Right ventricle myocardium inferior (tissue), 1 donor: ENCODE measurements at regions of chr17 and their contacts with region 1.

Region 1: GRCh38 chr17:82648166-82648668 is at the start of gene WDR45B:
- DNase-seq: peak; percentile 98
- ATAC-seq: peak; percentile 98
- total RNA-seq, gene WDR45B: 38.0 TPM

Region 2: GRCh38 chr17:82698065-82698973 is 50.1 kb after region 1 on chr17 and contains the start of gene RAB40B:
- intact Hi-C with region 1: loop called (anchors 5 kb)
- DNase-seq: peak; percentile 99
- ATAC-seq: peak; percentile 99
- total RNA-seq, gene RAB40B: 19.9 TPM

Region 3: DNA sequence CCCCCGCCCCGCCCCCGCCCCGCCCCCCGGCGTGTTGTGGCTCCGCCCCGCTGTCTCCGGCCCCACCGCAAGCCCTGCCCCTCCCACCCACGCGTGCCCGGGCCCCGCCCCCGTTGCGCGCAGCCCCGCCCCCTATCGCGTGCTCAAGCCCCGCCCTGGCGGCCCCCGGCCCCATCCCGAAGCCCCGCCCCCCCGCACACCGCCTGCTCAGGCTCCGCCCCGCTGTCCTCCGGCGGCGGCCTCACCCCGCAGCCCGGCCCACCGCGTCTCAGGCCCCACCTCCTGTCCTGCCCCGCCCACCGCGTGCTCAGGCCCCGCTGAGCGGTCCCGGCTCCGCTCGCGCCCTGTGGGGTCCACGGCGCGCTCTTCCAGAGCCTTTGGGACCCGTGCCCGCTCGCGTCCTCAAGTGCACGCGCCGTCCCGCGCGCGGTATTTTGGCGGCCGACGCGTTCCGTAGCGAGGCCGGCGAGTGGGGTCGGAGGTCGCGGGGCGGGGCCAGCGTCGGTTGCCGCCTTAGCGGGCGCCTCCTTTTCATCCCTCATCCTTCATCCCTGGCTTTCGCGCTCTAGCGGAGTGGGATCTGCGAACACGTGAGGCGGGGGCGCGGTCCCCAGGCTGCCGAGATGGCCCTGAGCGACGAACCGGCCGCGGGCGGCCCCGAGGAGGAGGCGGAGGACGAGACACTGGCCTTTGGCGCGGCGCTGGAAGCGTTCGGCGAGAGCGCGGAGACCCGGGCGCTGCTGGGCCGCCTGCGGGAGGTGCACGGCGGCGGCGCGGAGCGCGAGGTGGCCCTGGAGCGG is 103.6 kb after region 1 on chr17 and contains the start of gene TBCD:
- intact Hi-C with region 1: loop called (anchors 5 kb)
- DNase-seq: peak; percentile 93
- ATAC-seq: peak; percentile 93
- total RNA-seq, gene TBCD: 43.4 TPM

Region 4: GRCh38 chr17:83051395-83052233 is 403.4 kb after region 1 on chr17:
- intact Hi-C with region 1: no loop called
- DNase-seq: peak; percentile 98
- ATAC-seq: peak; percentile 98